Activated T-helper 1 cell treated with anti-CD3 and anti-CD28 coated beads, Interleukin-12 subunit alpha, Interleukin-12 subunit beta, Interleukin-2, Interleukin-4 antibody, amounts not matched to agents 30 ng/mL and 10 ng/mL and 1 ng/mL, durations not matched to agents 14 hours and 24 hours and 36 hours (primary cell): ENCODE measurements at regions of chr14 and their contacts with region 1.

Region 1: GRCh38 chr14:102362545-102363181 is at the starts of genes CINP and TECPR2:
- DNase-seq: peak; percentile 92
- H3K4me3 Mint-ChIP-seq: peak within 1 kb of the TSS; percentile 93
- H3K27ac Mint-ChIP-seq: peak within 1 kb of the TSS; percentile 91
- H3K4me1 Mint-ChIP-seq: peaks cover 32% of the 10 kb centered on the region
- H3K27me3 Mint-ChIP-seq: no peaks in the 10 kb centered on the region
- total RNA-seq, gene CINP: 39.6 and 42.5 TPM in 2 replicates
- total RNA-seq, gene TECPR2: 9.5 and 10.1 TPM in 2 replicates

Region 2: GRCh38 chr14:101731187-101732080 is 631.2 kb before region 1 on chr14:
- intact Hi-C with region 1: loop called (anchors 1 kb)
- DNase-seq: peak; percentile 79
- H3K4me3 Mint-ChIP-seq: peak overlapping the region; percentile 51
- H3K27ac Mint-ChIP-seq: peak overlapping the region; percentile 82
- H3K4me1 Mint-ChIP-seq: peaks cover 59% of the 10 kb centered on the region
- H3K27me3 Mint-ChIP-seq: no peaks in the 10 kb centered on the region

Region 3: GRCh38 chr14:102086972-102087761 is 275.5 kb before region 1 on chr14 and contains the start of gene HSP90AA1:
- intact Hi-C with region 1: loop called (anchors 5 kb)
- DNase-seq: peak; percentile 94
- H3K4me3 Mint-ChIP-seq: peak within 1 kb of the TSS; percentile 99
- H3K27ac Mint-ChIP-seq: peak within 1 kb of the TSS; percentile 97
- H3K4me1 Mint-ChIP-seq: peaks cover 63% of the 10 kb centered on the region
- H3K27me3 Mint-ChIP-seq: no peaks in the 10 kb centered on the region
- total RNA-seq, gene HSP90AA1: 993 and 995 TPM in 2 replicates

Region 4: DNA sequence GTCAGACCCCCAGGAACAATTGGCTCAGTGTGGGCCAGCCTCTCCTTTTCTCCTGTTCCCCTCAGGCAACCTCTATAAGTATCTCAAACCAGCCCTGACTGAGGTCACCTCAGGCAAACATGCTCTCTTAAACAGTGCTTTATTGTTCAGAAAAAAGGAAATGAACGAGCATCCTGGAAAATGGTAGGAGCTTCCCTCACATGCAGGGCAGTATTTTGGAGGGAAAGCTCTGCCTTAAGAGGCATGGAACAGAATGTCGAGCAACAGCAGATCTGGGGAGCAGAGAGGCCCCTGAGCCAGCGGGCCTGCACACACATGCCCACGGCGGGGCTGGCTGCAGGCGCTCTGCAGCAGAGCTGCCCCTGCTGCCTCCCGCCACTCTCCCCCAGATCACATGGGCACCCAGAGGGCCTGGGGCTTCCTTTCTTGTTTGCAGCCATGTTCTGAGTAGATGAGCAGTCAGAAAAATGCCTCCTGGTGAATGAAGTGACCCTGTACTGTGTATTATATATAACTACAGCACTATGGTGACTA is 99.7 kb before region 1 on chr14:
- intact Hi-C with region 1: no loop called
- DNase-seq: no peak
- H3K4me3 Mint-ChIP-seq: no peak overlapping the region
- H3K27ac Mint-ChIP-seq: no peak overlapping the region
- H3K4me1 Mint-ChIP-seq: no peaks in the 10 kb centered on the region
- H3K27me3 Mint-ChIP-seq: no peaks in the 10 kb centered on the region

Region 5: DNA sequence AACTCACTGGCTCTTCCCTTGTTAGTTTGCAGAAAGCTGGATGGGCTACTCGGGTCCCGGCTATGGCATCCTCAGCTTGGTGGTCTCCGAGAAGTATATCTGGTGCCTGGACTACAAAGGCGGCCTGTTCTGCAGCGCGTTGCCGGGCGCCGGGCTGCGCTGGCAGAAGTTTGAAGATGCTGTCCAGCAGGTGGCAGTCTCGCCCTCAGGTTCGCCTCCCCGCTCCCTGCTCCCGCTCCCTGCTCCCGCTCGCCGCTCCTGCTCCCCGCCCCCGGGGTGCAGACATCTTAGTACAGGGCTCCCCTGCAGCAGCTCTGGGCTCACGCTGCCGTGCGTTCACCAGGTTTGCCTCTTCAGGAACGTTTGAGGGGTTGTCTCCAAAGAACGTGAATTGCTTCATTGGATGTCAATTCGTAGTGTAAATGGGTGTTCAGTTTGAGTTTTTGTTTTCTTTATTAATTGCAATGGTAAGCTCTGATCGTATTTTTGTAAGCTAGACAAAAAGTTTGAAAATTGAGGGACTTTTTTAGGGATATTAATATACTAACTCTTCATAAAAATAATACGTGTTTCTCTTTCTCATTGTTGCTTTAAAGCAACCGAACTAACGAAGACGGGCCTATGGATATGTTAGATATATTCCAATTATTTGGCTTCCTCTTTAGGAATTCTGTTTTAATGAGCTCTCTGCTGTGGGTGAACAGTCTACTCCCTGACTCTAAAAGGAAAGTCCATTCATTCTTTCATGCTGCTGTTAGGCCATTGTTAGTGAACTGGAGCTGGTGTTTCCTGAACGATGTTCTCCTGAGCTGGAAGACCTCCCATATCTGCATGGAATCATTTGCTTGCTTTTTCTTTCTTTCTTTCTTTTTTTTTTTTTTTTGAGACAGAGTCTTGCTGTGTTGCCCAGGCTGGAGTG is 75.6 kb after region 1 on chr14:
- intact Hi-C with region 1: loop called (anchors 2 kb)
- DNase-seq: peak; percentile 64
- H3K4me3 Mint-ChIP-seq: peak overlapping the region; percentile 19
- H3K27ac Mint-ChIP-seq: no peak overlapping the region
- H3K4me1 Mint-ChIP-seq: peaks cover 5% of the 10 kb centered on the region
- H3K27me3 Mint-ChIP-seq: no peaks in the 10 kb centered on the region

Region 6: GRCh38 chr14:102882226-102882906 is 519.7 kb after region 1 on chr14:
- intact Hi-C with region 1: loop called (anchors 5 kb)
- DNase-seq: no peak
- H3K4me3 Mint-ChIP-seq: no peak overlapping the region
- H3K27ac Mint-ChIP-seq: peak overlapping the region; percentile 37
- H3K4me1 Mint-ChIP-seq: peaks cover 10% of the 10 kb centered on the region
- H3K27me3 Mint-ChIP-seq: no peaks in the 10 kb centered on the region